Heart right ventricle (tissue), 16 donors: ENCODE measurements at regions of chr3 and their contacts with region 1.

Region 1: GRCh38 chr3:128845778-128846485 is 33.5 kb upstream of the ACAD9 start:
- DNase-seq: peak; percentile 86 to 91
- ATAC-seq: peak; percentile 91 to 96 (median 94)
- H3K4me3 ChIP-seq: peak overlapping the region; percentile 20 to 70 (median 56)
- H3K27ac ChIP-seq: peak overlapping the region; percentile 67 to 88 (median 83)
- H3K4me1 ChIP-seq: peaks cover 0 to 20% (median 15%) of the 10 kb centered on the region in 9 donors
- H3K27me3 ChIP-seq: no peaks in the 10 kb centered on the region
- CTCF ChIP-seq: peak; percentile 43 to 76 (median 70)

Region 2: GRCh38 chr3:128680602-128681368 is 165.1 kb before region 1 on chr3:
- intact Hi-C with region 1: loop called in 8 of 10 experiments (anchors 2 to 10 kb)
- DNase-seq: peak; percentile 100
- ATAC-seq: peak; percentile 99 to 100 (median 100)
- H3K4me3 ChIP-seq: peak overlapping the region; percentile 54 to 78 (median 66)
- H3K27ac ChIP-seq: peak overlapping the region; percentile 88 to 99 (median 95)
- H3K4me1 ChIP-seq: peaks cover 0 to 21% (median 8%) of the 10 kb centered on the region in 9 donors
- H3K27me3 ChIP-seq: no peaks in the 10 kb centered on the region
- CTCF ChIP-seq: peak; percentile 92 to 100 (median 97)

Region 3: DNA sequence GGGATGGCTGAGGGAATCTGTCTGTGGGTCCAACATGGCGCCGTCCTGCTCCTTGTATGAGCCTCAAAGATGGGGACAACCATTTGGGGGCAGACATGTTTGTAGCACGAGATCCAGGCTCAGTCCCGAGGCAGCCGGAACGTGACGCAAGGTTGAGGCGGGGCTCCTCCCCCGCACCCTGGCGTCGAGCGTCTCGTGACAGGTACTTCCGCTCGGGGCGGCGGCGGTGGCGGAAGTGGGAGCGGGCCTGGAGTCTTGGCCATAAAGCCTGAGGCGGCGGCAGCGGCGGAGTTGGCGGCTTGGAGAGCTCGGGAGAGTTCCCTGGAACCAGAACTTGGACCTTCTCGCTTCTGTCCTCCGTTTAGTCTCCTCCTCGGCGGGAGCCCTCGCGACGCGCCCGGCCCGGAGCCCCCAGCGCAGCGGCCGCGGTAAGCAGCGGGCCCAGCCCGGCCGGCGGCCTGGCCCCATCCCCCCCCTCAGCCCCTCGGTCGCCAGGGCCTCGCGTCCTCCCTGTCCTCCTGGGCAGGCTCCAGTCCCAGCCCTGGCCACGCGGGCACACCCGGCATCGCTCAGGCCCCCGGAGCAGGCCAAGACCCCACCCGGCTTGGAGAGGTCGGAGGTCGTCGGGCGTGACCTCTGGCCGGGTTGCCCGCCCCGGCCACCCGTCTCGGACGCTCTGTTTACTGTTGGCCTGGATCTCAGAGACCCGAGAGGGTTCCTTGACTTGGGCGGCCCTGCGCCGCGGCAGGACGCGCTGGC is 119.8 kb before region 1 on chr3 and contains the start of gene RAB7A:
- intact Hi-C with region 1: loop called in 1 of 10 experiments (anchors 5 kb)
- DNase-seq: peak; percentile 97 to 98
- ATAC-seq: peak; percentile 98 to 100 (median 99)
- H3K4me3 ChIP-seq: peak within 1 kb of the TSS; percentile 58 to 100 (median 94)
- H3K27ac ChIP-seq: peak within 1 kb of the TSS; percentile 90 to 99 (median 96)
- H3K4me1 ChIP-seq: peaks cover 12 to 50% (median 42%) of the 10 kb centered on the region in 9 donors
- H3K27me3 ChIP-seq: no peaks in the 10 kb centered on the region
- CTCF ChIP-seq: peak in 2 of 9 donors; percentile 15 to 24
- total RNA-seq, gene RAB7A: 234 to 348 (median 310) TPM

Region 4: GRCh38 chr3:128794770-128795649 is 50.9 kb before region 1 on chr3:
- intact Hi-C with region 1: loop called in 2 of 10 experiments (anchors 5 to 10 kb)
- DNase-seq: peak in 1 of 2 donors; percentile 77
- ATAC-seq: peak; percentile 78 to 96 (median 94)
- H3K4me3 ChIP-seq: no peak overlapping the region
- H3K27ac ChIP-seq: peak overlapping the region in 7 of 10 donors; percentile 25 to 75 (median 50)
- H3K4me1 ChIP-seq: peaks cover 4 to 69% (median 49%) of the 10 kb centered on the region in 9 donors
- H3K27me3 ChIP-seq: no peaks in the 10 kb centered on the region
- CTCF ChIP-seq: peak; percentile 58 to 86 (median 82)

Region 5: DNA sequence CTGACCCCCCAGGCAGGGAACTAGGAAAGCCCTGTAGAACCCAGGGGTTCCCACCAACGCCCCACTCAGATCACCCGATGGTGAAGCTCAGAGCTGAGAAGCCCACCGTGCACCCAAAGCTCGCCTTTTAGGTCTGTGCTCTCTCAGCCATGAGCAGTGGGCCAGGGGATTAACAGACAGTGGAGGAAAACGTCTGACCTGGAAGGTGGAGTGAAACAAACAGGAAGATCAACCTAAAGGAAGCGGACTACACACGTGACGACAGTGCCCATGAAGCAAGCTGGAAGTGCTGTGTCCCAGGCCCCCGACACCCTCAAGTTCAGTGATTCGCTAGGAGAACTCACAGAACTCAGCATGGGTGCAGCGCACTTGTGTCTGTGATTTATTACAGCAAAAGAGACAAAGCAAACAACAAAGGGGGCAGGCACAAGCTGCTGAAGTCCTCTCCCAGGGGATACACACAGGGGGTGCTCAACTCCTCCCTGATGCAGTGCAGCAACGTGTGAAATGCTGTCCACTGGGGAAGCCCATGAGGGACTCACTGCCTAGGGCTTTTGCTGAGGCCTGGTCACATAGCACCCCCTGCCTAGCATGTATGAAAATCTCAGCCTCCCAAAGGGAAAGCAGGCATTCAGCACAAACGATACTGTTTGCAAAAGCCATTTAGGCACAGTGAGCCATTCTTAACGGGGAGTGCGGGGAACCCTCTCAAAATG is 104.4 kb after region 1 on chr3:
- intact Hi-C with region 1: no loop called
- DNase-seq: no peak
- ATAC-seq: peak in 5 of 8 donors; percentile 55 to 90 (median 64)
- H3K4me3 ChIP-seq: no peak overlapping the region
- H3K27ac ChIP-seq: no peak overlapping the region
- H3K4me1 ChIP-seq: no peaks in the 10 kb centered on the region
- H3K27me3 ChIP-seq: no peaks in the 10 kb centered on the region
- CTCF ChIP-seq: peak in 6 of 9 donors; percentile 23 to 51 (median 34)